Posterior cingulate gyrus (tissue), 11 donors: ENCODE measurements at regions of chr11 and their contacts with region 1.

Region 1: GRCh38 chr11:19076744-19077589 is 16.4 kb upstream of the MRGPRX2 start:
- DNase-seq: peak; percentile 29 to 92 (median 70)

Region 2: GRCh38 chr11:19218786-19219460 is 142.0 kb after region 1 on chr11:
- intact Hi-C with region 1: loop called (anchors 10 kb)
- DNase-seq: peak in 3 of 10 donors; percentile 36 to 86 (median 60)

Region 3: DNA sequence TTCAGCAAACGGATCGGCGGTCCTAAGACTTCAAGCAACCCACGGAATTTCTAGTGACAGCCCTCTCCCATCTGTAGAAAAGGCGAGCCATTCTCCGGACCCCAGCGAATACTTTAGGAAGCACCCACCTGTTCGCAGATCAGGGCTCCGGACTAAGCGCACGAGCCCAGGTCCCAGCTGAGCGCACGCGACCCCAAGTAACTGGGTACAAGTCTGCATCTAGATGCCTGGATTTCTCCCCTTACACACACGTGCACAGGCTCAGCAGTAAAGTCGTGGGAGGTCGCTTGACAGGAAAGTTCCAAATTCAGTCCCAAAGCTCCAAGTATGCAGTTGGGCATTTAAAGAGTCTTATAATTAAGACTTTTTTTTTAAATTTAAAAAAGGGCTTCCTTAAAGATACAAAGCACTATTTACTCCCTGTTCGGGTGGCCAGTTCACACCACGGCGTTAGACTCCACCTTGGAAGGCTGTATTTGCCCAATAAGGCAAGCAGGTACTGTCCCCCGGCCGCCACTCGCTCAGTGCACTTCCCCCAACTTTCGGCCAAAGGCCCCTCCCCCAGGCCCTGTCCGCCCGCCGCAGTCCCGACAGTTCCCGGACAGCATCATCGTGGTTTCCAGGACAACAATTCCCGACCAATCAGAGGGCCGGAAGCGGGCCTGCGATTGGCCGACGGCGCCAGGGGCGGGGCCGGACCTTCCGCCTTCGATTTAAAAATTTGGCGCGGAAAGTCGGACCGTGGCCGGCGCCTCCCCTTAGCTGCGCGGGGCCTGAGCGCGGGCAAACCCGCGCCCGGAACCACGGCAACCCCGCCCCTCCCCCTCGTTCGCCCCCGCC is 163.7 kb after region 1 on chr11 and contains the start of gene E2F8:
- intact Hi-C with region 1: loop called (anchors 5 kb)
- DNase-seq: peak; percentile 80 to 98 (median 90)